IMR-90 (cell line): ENCODE measurements at regions of chr4 and their contacts with region 1.

Region 1: DNA sequence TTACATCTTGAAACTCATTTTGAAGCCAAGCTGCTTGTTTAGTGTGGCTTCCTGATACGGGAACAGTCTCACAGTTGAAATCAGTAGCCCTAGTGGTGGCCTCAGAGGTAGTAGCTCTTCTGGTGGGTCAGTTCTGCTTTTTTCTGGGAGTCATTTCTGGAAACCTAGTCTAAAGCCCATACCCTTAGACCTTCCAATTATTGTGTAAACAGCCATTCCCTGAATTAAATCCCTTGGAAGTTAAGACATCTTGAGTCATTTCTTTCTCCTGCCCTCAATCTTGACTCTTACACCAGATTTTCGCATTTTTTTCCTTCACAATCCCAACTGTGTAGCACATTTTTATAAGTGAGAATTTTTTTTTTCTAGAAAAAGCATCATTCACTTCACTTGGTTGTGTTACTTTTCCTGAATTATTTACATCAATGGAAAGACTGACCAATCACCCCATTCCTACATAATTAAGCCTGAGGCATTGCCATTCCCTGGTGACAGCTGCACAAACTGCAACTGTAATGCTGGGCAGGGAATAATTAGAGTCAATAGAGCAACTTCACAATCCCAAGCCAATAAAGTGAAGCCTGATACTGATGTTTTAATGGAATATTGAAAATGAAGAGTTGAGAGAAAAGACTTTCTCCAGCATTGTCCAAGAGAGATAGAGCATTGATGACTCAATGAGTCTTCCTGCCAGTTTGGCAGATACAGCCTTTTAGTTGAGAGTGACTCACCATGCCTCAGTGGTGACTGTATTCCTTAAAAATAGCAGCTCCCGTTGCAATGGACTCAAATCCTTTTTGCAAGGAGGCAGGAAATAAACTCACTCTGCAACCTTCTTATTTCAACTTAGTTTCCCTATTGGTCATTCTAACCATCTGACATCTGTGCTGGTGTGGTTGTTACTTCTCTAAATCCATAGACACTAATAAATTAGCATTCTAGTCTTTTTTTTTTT is 13.0 kb upstream of the SEPSECS start:
- DNase-seq: peak; percentile 100
- ATAC-seq: peak; percentile 94
- H3K4me3 ChIP-seq: no peak overlapping the region
- H3K27ac ChIP-seq: peak overlapping the region; percentile 88
- H3K4me1 ChIP-seq: peaks cover 8% of the 10 kb centered on the region
- H3K27me3 ChIP-seq: no peaks in the 10 kb centered on the region
- CTCF ChIP-seq: no peak
- POLR2A ChIP-seq: no peak
- RAD21 ChIP-seq: no peak; the same call in 1 of the 2 replicates

Region 2: GRCh38 chr4:25113915-25114904 is 59.0 kb before region 1 on chr4:
- CTCF ChIA-PET with region 1: no interaction called
- POLR2A ChIA-PET with region 1: no interaction called
- dilution Hi-C with region 1: no loop called
- in situ Hi-C with region 1: no loop called
- intact Hi-C with region 1: no loop called
- DNase-seq: peak; percentile 71
- ATAC-seq: peak; percentile 90; the same call in 1 of the 2 replicates
- H3K4me3 ChIP-seq: no peak overlapping the region
- H3K27ac ChIP-seq: no peak overlapping the region
- H3K4me1 ChIP-seq: no peaks in the 10 kb centered on the region
- H3K27me3 ChIP-seq: peaks cover 16% of the 10 kb centered on the region
- CTCF ChIP-seq: no peak
- POLR2A ChIP-seq: no peak
- RAD21 ChIP-seq: no peak

Region 3: DNA sequence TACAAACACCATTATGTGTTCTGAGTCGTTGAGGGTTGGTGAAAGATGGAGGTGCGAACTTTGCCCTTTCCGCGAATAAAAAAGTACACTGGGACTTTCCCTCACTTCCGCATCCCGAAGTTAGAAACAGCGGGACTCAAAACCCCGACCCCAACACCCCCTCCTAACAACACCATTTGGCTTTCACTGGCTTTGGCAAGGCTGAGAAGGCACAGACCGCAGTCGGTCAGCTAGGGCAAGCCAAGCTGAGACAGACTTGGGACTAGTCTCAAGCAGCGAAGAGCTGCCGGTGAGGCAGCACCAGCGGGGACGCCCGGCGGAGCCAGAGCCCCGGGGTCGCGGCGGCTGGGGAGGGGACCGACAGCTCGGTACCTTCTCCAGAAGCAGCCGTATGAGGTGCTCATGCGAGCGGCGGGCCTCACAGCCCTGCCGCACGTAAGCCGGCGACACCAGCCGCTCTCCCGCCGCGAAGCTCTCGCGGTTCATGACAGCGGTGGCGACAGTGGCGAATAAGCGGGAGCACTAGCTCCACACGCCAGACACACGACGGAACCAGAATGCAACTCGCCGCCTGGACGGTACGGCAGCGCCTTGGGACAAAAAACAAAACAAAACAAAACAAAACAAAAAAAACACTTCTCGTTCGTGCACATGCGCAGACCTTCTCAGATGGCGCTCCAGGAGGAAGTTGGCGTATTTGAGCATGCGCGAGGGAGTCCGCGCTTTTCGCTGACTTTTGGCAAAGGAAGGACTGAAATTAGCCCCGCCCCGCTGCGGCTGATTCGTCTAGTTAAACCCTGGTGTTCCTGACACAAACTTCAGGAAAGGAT is 13.1 kb before region 1 on chr4 and contains the start of gene SEPSECS:
- CTCF ChIA-PET with region 1: interaction called, 7 read pairs
- POLR2A ChIA-PET with region 1: interaction called, 11 read pairs
- dilution Hi-C with region 1: no loop called
- in situ Hi-C with region 1: no loop called
- intact Hi-C with region 1: no loop called
- DNase-seq: peak; percentile 95
- ATAC-seq: peak; percentile 87
- H3K4me3 ChIP-seq: peak within 1 kb of the TSS; percentile 66
- H3K27ac ChIP-seq: peak within 1 kb of the TSS; percentile 81
- H3K4me1 ChIP-seq: peaks cover 2% of the 10 kb centered on the region; the same call in 1 of the 2 replicates
- H3K27me3 ChIP-seq: no peaks in the 10 kb centered on the region
- CTCF ChIP-seq: no peak
- POLR2A ChIP-seq: peak; percentile 63; the same call in 1 of the 2 replicates
- RAD21 ChIP-seq: 0 out of 2 replicates have a peak, but pooled peaks have one; percentile 1
- total RNA-seq, gene SEPSECS: 5.0 and 6.7 TPM in 2 replicates

Region 4: DNA sequence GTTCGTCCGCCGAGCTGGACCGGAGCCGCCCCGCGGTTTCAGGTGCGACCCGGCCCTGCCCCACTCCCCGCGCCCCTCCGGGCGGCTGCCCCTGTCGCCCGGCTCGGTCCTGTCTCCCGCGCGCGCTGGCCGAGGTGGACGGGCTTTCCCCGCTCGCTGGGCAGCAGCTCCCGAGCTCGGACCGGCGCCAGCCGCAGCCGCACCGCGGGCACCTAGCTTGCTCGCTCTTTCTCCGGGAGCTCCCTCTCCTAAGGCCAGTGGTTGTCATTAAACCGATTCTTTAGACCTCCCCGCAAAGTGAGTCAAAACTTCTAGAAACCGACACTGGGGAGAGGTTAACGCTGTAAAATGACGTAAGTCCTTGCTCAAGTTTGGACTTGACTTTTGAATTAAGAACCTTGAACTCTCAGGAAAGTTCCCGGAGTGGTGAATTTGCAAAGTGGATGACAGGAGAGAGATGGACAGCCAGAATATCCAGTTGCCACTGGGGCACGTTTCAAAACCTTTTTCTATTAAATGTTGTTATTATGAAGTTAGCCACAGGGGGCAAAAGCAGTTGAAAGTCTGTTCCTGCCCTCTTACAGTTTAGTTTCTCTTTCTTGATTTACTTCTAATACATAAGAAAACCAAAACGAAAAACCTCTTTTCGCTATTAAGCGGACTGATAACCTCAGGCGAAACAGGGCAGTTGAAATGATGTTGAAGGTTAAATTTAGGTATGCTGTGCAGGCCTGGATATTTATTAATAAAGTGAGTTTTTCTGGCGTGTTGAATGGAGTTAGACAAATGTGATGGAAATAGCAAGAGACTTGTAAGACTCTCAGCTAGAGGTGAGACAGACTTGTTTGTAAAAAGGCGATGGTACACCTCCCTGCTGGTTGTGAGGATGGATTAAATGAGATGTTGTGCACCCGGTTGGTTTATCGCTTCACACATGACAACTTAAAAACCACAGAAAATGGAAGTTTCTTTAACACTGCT is 61.4 kb after region 1 on chr4:
- CTCF ChIA-PET with region 1: no interaction called
- POLR2A ChIA-PET with region 1: no interaction called
- dilution Hi-C with region 1: no loop called
- in situ Hi-C with region 1: no loop called
- intact Hi-C with region 1: loop called (anchors 2 kb)
- DNase-seq: peak; percentile 81
- ATAC-seq: peak; percentile 79
- H3K4me3 ChIP-seq: peak overlapping the region; percentile 91
- H3K27ac ChIP-seq: peak overlapping the region; percentile 75
- H3K4me1 ChIP-seq: 0 out of 2 replicates have a peak, but pooled peaks cover 2% of the 10 kb centered on the region
- H3K27me3 ChIP-seq: no peaks in the 10 kb centered on the region; the same call in 1 of the 2 replicates
- CTCF ChIP-seq: peak; percentile 60
- POLR2A ChIP-seq: no peak
- RAD21 ChIP-seq: peak; percentile 47